Gastrocnemius medialis (tissue), 4 donors: ENCODE measurements at regions of chr6 and their contacts with region 1.

Region 1: DNA sequence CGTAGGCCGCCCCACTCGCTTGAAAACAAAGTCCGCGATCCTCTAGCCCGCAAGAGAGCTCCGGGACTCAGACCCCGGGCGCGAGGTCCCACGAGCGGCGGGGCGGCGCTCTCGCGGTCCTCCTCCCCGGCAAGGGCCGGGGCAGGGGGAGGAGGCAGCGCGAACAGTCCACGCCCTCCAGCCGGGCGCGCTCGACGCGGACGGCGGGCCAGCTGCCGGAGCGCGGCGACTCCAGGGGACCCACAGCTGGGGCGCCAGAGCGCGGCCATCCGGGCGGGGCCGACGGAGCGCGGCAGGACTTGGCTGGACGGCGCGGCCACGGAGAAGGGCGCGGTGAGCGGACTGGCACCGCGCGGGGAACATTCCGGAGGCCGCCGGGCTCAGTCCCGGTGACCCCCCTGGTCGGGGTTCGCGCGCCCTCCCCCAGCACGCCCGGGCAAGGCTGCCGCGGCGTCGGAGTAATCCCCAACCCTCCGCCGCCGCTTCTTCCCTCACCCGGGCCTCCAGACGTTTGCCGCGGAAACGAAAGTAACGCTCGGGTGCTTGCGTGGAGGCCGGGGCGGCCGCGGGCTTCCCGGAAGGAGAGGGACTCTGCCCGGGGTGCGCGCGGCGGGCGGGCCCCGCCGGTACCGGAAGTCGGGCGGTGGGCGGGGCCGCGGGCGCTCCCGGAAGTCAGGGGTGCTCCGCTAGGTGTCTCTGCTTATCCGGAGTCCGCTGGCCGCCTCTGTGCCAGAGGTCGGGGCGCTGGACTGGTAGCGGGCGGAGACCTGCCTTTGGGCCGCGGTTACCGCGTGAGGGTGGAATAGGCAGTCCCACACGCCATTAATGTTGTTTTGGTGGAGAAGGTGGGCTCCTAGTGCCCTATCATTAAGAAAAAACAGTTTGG is at the start of gene RIPK1:
- DNase-seq: peak; percentile 91 to 95
- ATAC-seq: peak; percentile 87 to 89
- H3K4me3 ChIP-seq: peak within 1 kb of the TSS; percentile 59 to 97 (median 77)
- H3K27ac ChIP-seq: peak within 1 kb of the TSS; percentile 91 to 100 (median 96)
- H3K4me1 ChIP-seq: peaks cover 29 to 36% of the 10 kb centered on the region in 2 donors
- H3K27me3 ChIP-seq: no peaks in the 10 kb centered on the region
- CTCF ChIP-seq: peak in 3 of 5 experiments; percentile 16 to 45 (median 35)
- POLR2A ChIP-seq: peak; percentile 95 to 98
- total RNA-seq, gene RIPK1: 8.6 to 12.0 (median 10.3) TPM

Region 2: DNA sequence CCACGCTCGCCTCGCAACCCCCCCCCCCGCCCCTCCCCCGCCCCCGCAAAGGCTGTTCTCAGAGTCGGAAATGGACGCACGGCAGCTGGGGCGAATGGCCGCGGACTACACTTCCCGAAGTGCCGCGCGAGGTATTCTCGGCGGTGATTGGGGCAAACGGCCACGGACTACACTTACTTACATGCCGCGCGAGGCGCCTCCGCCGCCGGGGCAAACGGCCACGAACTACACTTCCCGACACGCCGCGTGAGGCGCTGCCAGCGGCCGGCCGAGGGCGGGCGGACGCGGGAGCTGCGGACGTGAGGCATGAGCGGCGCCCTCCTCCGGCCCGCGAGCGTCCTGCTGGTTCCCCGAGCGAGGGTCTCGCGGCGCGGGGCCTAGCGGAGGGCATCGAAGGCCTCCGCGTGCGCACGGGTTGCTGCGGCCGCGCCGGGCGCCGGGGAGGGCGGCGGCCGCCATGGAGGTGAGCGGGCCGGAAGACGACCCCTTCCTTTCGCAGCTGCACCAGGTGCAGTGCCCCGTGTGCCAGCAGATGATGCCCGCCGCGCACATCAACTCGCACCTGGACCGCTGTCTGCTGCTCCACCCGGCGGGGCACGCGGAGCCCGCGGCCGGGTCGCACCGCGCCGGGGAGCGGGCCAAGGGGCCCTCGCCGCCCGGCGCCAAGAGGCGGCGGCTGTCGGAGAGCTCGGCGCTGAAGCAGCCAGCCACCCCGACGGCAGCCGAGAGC is 303.2 kb before region 1 on chr6 and contains the start of gene WRNIP1:
- in situ Hi-C with region 1: no loop called
- intact Hi-C with region 1: loop called (anchors 5 kb)
- DNase-seq: peak; percentile 98 to 100
- ATAC-seq: peak; percentile 87 to 90
- H3K4me3 ChIP-seq: peak within 1 kb of the TSS; percentile 62 to 88 (median 74)
- H3K27ac ChIP-seq: peak within 1 kb of the TSS; percentile 85 to 96 (median 91)
- H3K4me1 ChIP-seq: peaks cover 39 to 47% of the 10 kb centered on the region in 2 donors
- H3K27me3 ChIP-seq: no peaks in the 10 kb centered on the region
- CTCF ChIP-seq: peak; percentile 56 to 81 (median 75)
- POLR2A ChIP-seq: peak; percentile 90 to 92
- total RNA-seq, gene WRNIP1: 51.9 to 66.0 (median 57.3) TPM

Region 3: DNA sequence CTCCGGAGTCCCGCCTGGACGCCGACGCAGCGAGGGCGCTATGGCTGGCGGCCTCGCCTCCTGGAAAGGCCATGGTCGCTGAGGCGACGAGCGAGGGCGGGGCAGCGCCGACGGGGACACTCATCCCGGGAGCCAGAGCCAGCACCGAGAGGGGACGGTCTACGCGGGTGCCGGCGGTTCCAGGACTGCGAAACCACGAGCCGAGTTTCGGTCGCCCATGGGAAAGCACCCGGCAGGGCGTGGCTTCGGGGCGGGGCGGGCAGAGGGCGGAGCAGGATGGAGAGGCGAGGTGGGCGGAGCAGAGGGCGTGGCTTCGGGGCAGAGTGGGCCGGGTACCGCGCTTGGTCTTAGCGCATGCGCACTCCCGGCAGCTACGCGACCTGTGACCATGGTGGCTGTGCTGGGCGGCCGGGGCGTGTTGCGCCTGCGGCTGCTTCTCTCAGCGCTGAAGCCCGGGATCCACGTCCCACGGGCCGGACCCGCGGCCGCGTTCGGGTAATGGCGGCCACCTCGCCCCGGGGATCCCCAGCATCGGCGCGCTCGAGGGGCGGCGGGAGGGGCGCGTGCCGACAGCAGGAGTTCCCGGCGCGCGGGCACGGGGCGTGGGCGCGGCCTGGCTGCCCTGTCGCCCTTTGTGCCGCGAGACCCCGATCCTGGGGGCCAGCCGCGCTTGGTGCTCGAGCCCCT is 49.9 kb after region 1 on chr6 and contains the start of gene BPHL:
- in situ Hi-C with region 1: no loop called
- intact Hi-C with region 1: loop called (anchors 2 kb)
- DNase-seq: peak; percentile 95 to 96
- ATAC-seq: peak; percentile 96
- H3K4me3 ChIP-seq: peak within 1 kb of the TSS; percentile 78 to 90 (median 82)
- H3K27ac ChIP-seq: peak within 1 kb of the TSS; percentile 90 to 97 (median 96)
- H3K4me1 ChIP-seq: peaks cover 13 to 14% of the 10 kb centered on the region in 2 donors
- H3K27me3 ChIP-seq: no peaks in the 10 kb centered on the region
- CTCF ChIP-seq: no peak
- POLR2A ChIP-seq: peak; percentile 76
- total RNA-seq, gene BPHL: 4.7 to 8.7 (median 5.8) TPM

Region 4: GRCh38 chr6:3162565-3163247 is 94.1 kb after region 1 on chr6:
- in situ Hi-C with region 1: no loop called
- intact Hi-C with region 1: loop called (anchors 5 kb)
- DNase-seq: peak; percentile 40 to 60
- ATAC-seq: peak; percentile 74 to 82
- H3K4me3 ChIP-seq: peak overlapping the region; percentile 71 to 99 (median 82)
- H3K27ac ChIP-seq: peak overlapping the region; percentile 87 to 91 (median 88)
- H3K4me1 ChIP-seq: peaks cover 4% of the 10 kb centered on the region in 2 donors
- H3K27me3 ChIP-seq: no peaks in the 10 kb centered on the region
- CTCF ChIP-seq: peak in 1 of 5 experiments; percentile 30
- POLR2A ChIP-seq: peak; percentile 36 to 60